ENCODE measurements at regions of chr22 and their contacts with region 1.

Region 1: DNA sequence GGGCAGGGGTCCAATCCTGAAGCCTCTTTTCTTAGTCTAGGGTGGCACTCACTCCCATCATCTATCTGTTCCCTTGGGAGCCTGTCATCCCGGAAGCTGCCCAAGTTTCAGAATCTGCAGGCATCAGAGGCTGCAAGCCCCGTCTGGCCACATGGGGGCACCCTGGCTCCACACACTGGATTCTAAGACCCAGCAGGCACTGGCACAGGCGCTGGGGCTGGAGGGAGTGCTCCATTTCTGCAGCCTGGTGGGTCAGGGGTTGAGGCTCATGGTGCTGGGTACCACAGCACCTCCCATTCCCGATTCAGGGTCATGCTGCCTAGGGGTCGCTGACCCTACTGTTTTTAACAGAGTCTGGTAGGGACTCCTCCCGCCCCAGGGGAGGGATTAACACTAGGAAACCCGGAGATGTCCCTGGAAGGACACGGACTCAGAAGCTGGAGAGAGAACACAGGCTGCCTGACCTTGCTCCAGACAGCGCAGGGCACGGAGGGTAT is 243.9 kb upstream of the SYN3 start:
- DNase-seq: peak; percentile 85
- H3K4me3 ChIP-seq: no peak overlapping the region
- H3K27ac ChIP-seq: no peak overlapping the region
- H3K4me1 ChIP-seq: no peaks in the 10 kb centered on the region
- H3K27me3 ChIP-seq: no peaks in the 10 kb centered on the region
- CTCF ChIP-seq: peak; percentile 90 to 93 (median 91)
- EP300 ChIP-seq: no peak
- POLR2A ChIP-seq: no peak

Region 2: GRCh38 chr22:32528984-32529982 is 772.8 kb before region 1 on chr22:
- in situ Hi-C with region 1: no loop called
- intact Hi-C with region 1: no loop called
- DNase-seq: peak; percentile 87
- H3K4me3 ChIP-seq: no peak overlapping the region
- H3K27ac ChIP-seq: peak overlapping the region; percentile 27 to 76 (median 64)
- H3K4me1 ChIP-seq: peaks cover 7 to 38% (median 21%) of the 10 kb centered on the region in 4 donors
- H3K27me3 ChIP-seq: no peaks in the 10 kb centered on the region
- CTCF ChIP-seq: peak; percentile 85 to 93 (median 86)
- EP300 ChIP-seq: no peak
- POLR2A ChIP-seq: no peak

Region 3: DNA sequence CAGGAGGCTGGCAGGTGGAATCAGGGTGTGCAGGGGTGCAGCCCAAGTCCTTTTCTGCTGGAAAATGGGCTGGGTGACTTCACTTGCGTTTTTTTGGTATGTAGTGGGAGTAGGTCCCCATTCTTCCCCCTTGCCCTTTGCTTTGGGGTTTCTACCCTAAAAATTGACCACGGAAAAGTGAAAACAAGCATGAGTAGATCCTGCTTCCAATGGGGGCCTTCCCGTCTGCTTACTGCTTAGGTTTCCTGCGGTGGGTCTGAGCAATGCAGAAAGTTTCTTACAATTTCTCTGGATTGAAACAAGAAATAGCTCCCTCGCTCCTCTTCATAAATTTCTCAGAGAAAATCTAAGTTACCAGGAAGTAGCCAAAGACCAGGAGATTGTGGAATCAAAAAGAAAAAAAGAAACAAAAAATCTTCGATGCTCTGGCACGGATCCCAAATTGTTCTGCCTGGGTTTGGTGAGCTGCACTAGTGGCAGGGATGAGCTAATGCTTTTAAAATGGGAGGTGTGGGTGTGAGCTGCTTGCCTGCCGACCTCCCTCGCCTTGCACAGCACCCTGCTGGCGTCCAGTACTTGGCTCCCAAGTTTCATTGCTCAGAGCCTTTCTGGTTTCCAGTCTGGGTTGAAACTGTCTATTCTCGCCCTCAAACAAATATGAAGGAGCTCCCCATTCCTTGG is 498.2 kb before region 1 on chr22:
- in situ Hi-C with region 1: no loop called
- intact Hi-C with region 1: no loop called
- DNase-seq: no peak
- H3K4me3 ChIP-seq: peak overlapping the region; percentile 17 to 62 (median 52)
- H3K27ac ChIP-seq: peak overlapping the region; percentile 75 to 93 (median 85)
- H3K4me1 ChIP-seq: peaks cover 7 to 44% (median 23%) of the 10 kb centered on the region in 4 donors
- H3K27me3 ChIP-seq: peaks cover 43% of the 10 kb centered on the region
- CTCF ChIP-seq: peak in 1 of 5 experiments; percentile 12
- EP300 ChIP-seq: no peak
- POLR2A ChIP-seq: no peak

Region 4: GRCh38 chr22:32932176-32932575 is 369.9 kb before region 1 on chr22:
- in situ Hi-C with region 1: no loop called
- intact Hi-C with region 1: no loop called
- DNase-seq: no peak
- H3K4me3 ChIP-seq: no peak overlapping the region
- H3K27ac ChIP-seq: no peak overlapping the region
- H3K4me1 ChIP-seq: no peaks in the 10 kb centered on the region
- H3K27me3 ChIP-seq: no peaks in the 10 kb centered on the region
- CTCF ChIP-seq: no peak
- EP300 ChIP-seq: no peak
- POLR2A ChIP-seq: no peak

Region 5: DNA sequence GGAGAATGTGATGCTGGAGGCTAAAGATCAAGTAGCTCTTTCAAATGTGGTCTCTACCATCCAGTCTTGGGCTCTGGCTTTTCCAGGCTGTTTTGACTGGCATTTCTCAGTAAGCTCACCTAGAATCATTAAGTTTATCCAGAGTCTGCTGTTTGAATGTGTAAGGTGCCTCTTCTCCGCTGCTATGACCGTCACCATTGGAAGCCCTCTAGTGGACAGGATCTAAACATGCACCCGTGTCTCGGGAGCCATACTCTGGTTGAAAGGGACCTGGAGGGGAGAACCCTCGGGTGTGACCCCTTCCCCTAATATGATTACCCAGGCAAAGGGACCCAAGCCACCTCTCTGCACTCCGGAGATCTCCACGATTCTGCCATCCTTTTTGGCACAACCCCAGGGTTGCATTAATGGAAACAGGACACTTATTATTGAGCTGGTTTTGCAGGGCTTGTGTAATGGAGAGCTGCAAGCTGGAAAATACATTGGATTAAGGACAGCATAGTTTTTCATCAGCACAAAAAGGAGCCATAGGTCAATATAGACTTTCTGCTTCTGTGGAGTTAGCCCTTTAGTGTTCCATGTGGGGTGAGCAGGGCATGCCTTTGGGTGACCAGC is 809.2 kb after region 1 on chr22:
- in situ Hi-C with region 1: loop called in 3 of 4 experiments (anchors 25 kb)
- intact Hi-C with region 1: loop called (anchors 10 kb)
- DNase-seq: peak; percentile 12
- H3K4me3 ChIP-seq: no peak overlapping the region
- H3K27ac ChIP-seq: no peak overlapping the region
- H3K4me1 ChIP-seq: peaks cover 0 to 4% (median 2%) of the 10 kb centered on the region in 4 donors
- H3K27me3 ChIP-seq: peaks cover 8% of the 10 kb centered on the region
- CTCF ChIP-seq: peak; percentile 54 to 74 (median 67)
- EP300 ChIP-seq: no peak
- POLR2A ChIP-seq: no peak